Spleen (tissue), 13 donors: ENCODE measurements at regions of chr17 and their contacts with region 1.

Region 1: DNA sequence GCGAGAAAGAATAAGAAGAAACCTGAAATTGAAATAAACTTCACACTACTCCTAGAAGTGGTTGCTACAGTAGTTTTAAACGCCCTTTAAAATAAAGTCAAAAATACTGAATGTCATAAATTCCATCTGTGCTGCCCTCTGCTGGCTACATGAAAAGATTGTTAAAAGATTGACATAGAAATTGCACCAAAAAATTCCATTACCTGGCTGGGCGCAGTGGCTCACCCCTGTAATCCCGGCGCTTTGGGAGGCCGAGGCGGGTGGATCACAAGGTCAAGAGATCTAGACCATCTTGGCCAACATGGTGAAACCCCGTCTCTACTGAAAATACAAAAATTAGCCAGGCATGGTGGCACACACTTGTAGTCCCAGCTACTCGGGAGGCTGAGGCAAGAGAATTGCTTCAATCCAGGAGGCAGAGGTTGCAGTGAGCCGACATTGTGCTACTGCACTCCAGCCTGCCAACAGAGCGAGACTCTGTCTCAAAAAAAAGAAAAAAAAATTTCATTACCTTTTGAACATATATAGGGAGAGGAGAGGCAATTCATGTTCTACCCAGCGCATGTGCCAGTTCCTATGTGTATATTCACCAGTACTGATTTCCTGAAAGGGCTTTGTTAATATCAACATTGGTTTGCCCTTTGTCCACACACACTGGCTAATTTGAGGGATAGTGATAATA is 36.5 kb downstream of the CYTH1 start:
- DNase-seq: peak; percentile 79
- H3K4me3 ChIP-seq: no peak overlapping the region
- H3K27ac ChIP-seq: peak overlapping the region in 5 of 8 donors; percentile 47 to 93 (median 90)
- H3K4me1 ChIP-seq: peaks cover 63 to 100% (median 91%) of the 10 kb centered on the region in 6 donors
- H3K27me3 ChIP-seq: no peaks in the 10 kb centered on the region
- CTCF ChIP-seq: peak; percentile 20 to 69 (median 58)
- POLR2A ChIP-seq: no peak

Region 2: DNA sequence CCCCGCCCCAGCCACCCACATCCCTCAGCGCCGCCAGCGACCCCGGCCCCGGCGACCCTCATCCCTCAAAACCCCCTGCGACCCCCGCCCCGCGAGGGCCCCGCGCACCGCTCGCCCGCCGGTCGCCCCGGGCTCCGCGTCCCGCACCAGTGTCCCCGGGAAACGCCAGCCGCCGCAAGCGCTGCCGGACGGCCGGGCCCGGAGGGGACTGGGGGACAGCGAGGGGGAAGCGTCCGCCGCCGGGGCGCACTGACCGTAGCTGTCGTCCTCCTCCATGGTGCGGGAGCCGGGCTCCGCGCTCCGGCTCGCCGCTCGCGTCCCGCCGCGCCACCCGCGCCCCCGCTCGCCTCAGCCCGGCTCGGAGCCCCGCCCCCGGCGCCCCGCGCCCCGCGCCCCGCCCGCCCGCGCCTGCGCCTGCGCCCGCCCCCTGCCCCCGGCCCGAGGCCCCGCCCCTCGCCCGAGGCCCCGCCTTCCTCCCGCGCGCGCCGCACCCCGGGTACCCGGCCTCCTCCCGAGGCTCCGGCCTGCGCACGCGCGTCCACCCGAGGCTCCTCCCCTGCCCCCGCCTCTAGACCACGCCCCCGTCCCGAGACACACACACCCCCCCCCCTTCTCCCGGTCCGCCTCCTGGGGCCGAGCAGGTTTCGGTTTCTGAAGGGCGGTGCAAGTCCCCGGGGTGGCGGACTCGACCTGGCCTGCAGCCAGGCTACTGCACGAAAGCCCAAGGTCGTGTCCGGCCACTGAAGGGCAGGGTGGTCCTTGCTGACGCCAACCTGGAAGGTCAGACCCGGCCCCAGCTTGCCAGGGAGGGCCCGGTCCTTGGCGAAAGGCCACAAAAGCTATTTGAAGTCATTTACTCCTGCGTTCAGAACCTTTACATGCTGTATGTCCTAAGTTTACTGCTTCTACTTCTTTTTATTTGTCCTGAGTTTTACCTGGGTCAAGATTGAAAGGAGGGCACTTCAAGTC is 36.7 kb after region 1 on chr17 and contains the start of gene CYTH1:
- intact Hi-C with region 1: loop called (anchors 5 kb)
- DNase-seq: peak; percentile 99
- H3K4me3 ChIP-seq: peak within 1 kb of the TSS; percentile 67 to 94 (median 83)
- H3K27ac ChIP-seq: peak within 1 kb of the TSS; percentile 86 to 99 (median 98)
- H3K4me1 ChIP-seq: peaks cover 43 to 77% (median 60%) of the 10 kb centered on the region in 6 donors
- H3K27me3 ChIP-seq: no peaks in the 10 kb centered on the region
- CTCF ChIP-seq: no peak
- POLR2A ChIP-seq: peak in 1 of 3 donors; percentile 41
- total RNA-seq, gene CYTH1: 119 to 169 (median 138) TPM